ENCODE measurements at regions of chr6 and their contacts with region 1.

Region 1: DNA sequence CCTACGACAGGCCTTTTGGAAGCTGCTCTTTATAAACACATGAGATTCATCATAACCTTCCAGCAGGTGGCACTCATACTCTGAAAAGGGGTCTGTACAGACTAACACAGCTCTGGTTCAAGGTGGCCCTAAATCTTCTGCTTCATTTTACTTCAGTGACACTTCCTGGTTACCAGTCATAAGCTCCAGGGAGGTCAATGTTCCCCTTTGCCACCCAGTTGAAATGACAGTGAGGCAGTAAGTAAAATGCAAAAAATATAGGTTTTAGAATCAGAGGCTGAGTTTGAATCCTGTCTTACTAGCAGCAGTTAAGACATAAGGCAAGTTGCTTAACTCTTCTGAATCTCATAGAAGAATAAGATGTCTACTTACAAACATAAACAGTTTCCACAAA is 132.8 kb downstream of the CDK19 start:
- DNase-seq: peak; percentile 89
- ATAC-seq: peak; percentile 97
- H3K4me3 ChIP-seq: no peak overlapping the region
- H3K4me3 Mint-ChIP-seq: no peak overlapping the region
- H3K27ac ChIP-seq: peak overlapping the region in 1 of 2 donors; percentile 15
- H3K27ac Mint-ChIP-seq: peak overlapping the region; percentile 80
- H3K4me1 ChIP-seq: peaks cover 4 to 12% of the 10 kb centered on the region in 2 donors
- H3K4me1 Mint-ChIP-seq: peaks cover 14% of the 10 kb centered on the region
- H3K27me3 ChIP-seq: no peaks in the 10 kb centered on the region
- H3K27me3 Mint-ChIP-seq: no peaks in the 10 kb centered on the region
- CTCF ChIP-seq: peak; percentile 84

Region 2: GRCh38 chr6:110664933-110665332 is 17.5 kb before region 1 on chr6:
- CTCF ChIA-PET with region 1: interaction called, 18 read pairs
- POLR2A ChIA-PET with region 1: no interaction called
- intact Hi-C with region 1: no loop called
- DNase-seq: peak; percentile 58
- ATAC-seq: peak; percentile 68
- H3K4me3 ChIP-seq: no peak overlapping the region
- H3K4me3 Mint-ChIP-seq: peak overlapping the region; percentile 5
- H3K27ac ChIP-seq: peak overlapping the region; percentile 51 to 66
- H3K27ac Mint-ChIP-seq: peak overlapping the region; percentile 66
- H3K4me1 ChIP-seq: peaks cover 17 to 21% of the 10 kb centered on the region in 2 donors
- H3K4me1 Mint-ChIP-seq: peaks cover 18% of the 10 kb centered on the region
- H3K27me3 ChIP-seq: no peaks in the 10 kb centered on the region
- H3K27me3 Mint-ChIP-seq: no peaks in the 10 kb centered on the region
- CTCF ChIP-seq: no peak

Region 3: DNA sequence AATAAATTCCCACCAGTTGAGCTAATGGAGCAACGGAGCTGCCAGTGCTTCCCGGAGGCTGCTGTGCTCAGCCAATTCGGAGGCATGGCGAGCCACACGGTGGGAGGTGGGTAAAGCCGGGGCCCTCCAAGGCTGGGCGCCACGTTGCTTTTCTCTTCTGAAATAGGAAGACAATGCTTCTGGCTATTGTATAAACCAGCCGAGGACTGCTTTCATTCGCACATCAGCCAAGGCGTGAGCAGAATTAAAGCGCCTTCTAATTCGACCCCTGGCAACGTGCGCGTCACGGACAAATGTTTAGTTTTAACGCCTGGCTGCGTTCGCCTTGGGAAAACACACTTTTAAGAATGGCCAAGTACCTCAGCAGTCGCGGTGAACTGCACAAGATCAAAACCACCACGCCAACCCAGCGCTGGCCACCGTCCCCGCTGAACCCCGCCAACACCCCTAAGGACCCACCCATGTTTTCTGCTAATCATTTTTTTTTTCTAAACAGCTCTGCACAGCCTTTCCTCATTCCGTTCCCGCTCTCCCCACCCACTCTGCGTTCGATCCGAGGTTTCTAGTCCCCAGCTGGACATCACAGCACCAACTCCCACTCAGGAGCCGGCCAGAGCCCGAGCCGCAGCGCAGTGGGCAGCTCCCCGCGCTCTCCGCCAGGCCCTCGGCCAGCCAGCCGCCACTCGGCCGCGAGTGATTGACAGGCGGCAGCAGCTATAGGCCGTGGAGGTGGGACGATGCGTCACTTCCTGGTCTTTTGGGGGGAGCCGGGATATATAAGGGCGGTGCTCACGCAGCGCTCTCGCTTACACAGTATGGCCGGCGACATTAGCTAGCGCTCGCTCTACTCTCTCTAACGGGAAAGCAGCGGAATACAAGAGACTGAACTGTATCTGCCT is 191.8 kb after region 1 on chr6 and contains the start of gene AMD1:
- CTCF ChIA-PET with region 1: interaction called, 95 read pairs
- POLR2A ChIA-PET with region 1: interaction called, 8 read pairs
- intact Hi-C with region 1: loop called (anchors 1 kb)
- DNase-seq: peak; percentile 98
- ATAC-seq: peak; percentile 77
- H3K4me3 ChIP-seq: peak within 1 kb of the TSS; percentile 78 to 96 (median 93)
- H3K4me3 Mint-ChIP-seq: peak within 1 kb of the TSS; percentile 100
- H3K27ac ChIP-seq: peak within 1 kb of the TSS; percentile 80 to 88
- H3K27ac Mint-ChIP-seq: peak within 1 kb of the TSS; percentile 100
- H3K4me1 ChIP-seq: peaks cover 30 to 34% of the 10 kb centered on the region in 2 donors
- H3K4me1 Mint-ChIP-seq: peaks cover 40% of the 10 kb centered on the region
- H3K27me3 ChIP-seq: no peaks in the 10 kb centered on the region
- H3K27me3 Mint-ChIP-seq: no peaks in the 10 kb centered on the region
- CTCF ChIP-seq: no peak
- total RNA-seq, gene AMD1: 49.3 and 49.8 TPM in 2 replicates

Region 4: DNA sequence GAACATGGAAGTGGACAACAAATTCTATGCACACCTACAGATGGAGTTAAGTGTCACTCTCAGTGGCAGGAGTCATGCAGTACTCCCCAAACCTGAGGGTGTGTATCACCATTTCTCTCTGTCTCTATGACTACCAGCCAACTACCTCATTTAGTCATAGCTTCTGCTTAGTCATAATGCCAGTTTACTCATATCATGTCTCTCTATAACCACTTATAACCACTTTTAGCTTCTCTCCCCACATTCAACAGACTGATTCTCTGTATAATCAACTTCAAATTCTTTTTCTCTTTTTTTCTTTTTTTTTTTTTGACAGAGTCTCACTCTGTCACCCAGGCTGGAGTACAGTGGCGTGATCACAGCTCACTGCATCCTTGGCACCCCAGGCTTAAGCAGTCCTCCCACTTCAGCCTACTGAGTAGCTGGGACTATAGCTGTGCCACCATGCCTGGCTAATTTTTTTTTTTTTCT is 262.3 kb after region 1 on chr6:
- CTCF ChIA-PET with region 1: interaction called, 190 read pairs
- POLR2A ChIA-PET with region 1: no interaction called
- intact Hi-C with region 1: loop called (anchors 1 kb)
- DNase-seq: peak; percentile 40
- ATAC-seq: peak; percentile 88
- H3K4me3 ChIP-seq: no peak overlapping the region
- H3K4me3 Mint-ChIP-seq: no peak overlapping the region
- H3K27ac ChIP-seq: no peak overlapping the region
- H3K27ac Mint-ChIP-seq: peak overlapping the region; percentile 65
- H3K4me1 ChIP-seq: no peaks in the 10 kb centered on the region
- H3K4me1 Mint-ChIP-seq: no peaks in the 10 kb centered on the region
- H3K27me3 ChIP-seq: no peaks in the 10 kb centered on the region
- H3K27me3 Mint-ChIP-seq: no peaks in the 10 kb centered on the region
- CTCF ChIP-seq: no peak

Region 5: GRCh38 chr6:110958329-110959192 is 276.1 kb after region 1 on chr6 and contains the start of gene GTF3C6:
- CTCF ChIA-PET with region 1: interaction called, 190 read pairs
- POLR2A ChIA-PET with region 1: interaction called, 3 read pairs
- intact Hi-C with region 1: no loop called
- DNase-seq: peak; percentile 94
- ATAC-seq: peak; percentile 99
- H3K4me3 ChIP-seq: peak within 1 kb of the TSS; percentile 65 to 96 (median 93)
- H3K4me3 Mint-ChIP-seq: peak within 1 kb of the TSS; percentile 98
- H3K27ac ChIP-seq: peak within 1 kb of the TSS; percentile 88 to 94
- H3K27ac Mint-ChIP-seq: peak within 1 kb of the TSS; percentile 98
- H3K4me1 ChIP-seq: peaks cover 8 to 16% of the 10 kb centered on the region in 2 donors
- H3K4me1 Mint-ChIP-seq: peaks cover 17% of the 10 kb centered on the region
- H3K27me3 ChIP-seq: no peaks in the 10 kb centered on the region
- H3K27me3 Mint-ChIP-seq: peaks cover 4% of the 10 kb centered on the region
- CTCF ChIP-seq: no peak
- total RNA-seq, gene GTF3C6: 34.7 and 36.4 TPM in 2 replicates

Region 6: DNA sequence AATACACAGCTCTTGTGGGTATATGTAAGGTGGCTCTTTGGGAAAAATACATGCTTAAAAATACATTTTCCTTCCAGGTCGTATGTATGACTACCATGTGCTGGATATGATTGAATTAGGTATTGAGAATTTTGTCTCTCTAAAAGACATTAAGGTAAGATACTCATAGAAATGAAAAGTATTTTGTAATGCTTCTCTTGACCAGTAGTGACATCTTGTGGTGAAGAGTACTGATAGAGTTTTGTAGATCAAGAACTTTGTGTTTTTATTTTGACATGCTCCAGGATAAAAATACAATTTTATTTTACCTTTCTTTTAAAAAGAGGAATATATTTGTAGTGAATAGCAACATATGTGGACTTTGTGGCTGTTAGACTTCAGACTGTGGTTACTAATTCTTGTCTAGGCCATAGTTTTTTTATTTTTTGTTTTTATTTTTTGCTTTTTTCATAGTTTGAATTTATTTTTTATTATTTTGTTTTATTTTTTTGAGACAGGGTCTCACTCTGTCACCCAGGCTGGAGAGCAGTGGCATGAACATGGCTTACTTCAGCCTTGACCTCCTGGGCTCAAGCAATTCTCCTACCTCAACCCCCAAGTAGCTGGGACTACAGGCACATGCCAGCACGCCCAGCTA is 317.3 kb after region 1 on chr6:
- CTCF ChIA-PET with region 1: interaction called, 21 read pairs
- POLR2A ChIA-PET with region 1: no interaction called
- intact Hi-C with region 1: loop called (anchors 1 kb)
- DNase-seq: peak; percentile 42
- ATAC-seq: no peak
- H3K4me3 ChIP-seq: no peak overlapping the region
- H3K4me3 Mint-ChIP-seq: no peak overlapping the region
- H3K27ac ChIP-seq: no peak overlapping the region
- H3K27ac Mint-ChIP-seq: no peak overlapping the region
- H3K4me1 ChIP-seq: no peaks in the 10 kb centered on the region
- H3K4me1 Mint-ChIP-seq: no peaks in the 10 kb centered on the region
- H3K27me3 ChIP-seq: no peaks in the 10 kb centered on the region
- H3K27me3 Mint-ChIP-seq: no peaks in the 10 kb centered on the region
- CTCF ChIP-seq: peak; percentile 65

Measured in B cell (primary cell).